ENCODE measurements at regions of chr1 and their contacts with region 1.

Region 1: DNA sequence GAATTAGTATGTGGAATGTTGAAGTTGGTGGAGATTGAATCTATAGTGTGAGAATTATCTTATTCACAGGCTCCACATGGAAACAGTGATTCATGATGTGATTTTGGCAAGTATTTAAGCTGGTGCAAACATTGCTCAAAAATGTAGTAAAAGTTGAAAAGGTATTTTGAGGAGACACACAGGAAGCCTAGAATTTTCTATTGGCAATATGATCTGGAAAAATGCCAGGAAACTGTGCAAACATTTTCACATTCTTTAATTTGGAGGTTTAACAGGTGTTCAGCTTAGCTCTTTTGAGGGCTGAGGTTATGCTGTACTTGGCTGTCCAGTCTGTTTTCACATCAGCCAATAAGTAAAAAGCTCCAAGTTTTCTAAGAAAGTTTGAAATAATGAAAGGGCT is 327.3 kb downstream of the RWDD3 start:
- DNase-seq: no peak
- H3K4me3 ChIP-seq: no peak overlapping the region
- H3K27ac ChIP-seq: no peak overlapping the region
- H3K4me1 ChIP-seq: no peaks in the 10 kb centered on the region
- H3K27me3 ChIP-seq: no peaks in the 10 kb centered on the region
- CTCF ChIP-seq: no peak
- EP300 ChIP-seq: no peak
- POLR2A ChIP-seq: no peak

Region 2: DNA sequence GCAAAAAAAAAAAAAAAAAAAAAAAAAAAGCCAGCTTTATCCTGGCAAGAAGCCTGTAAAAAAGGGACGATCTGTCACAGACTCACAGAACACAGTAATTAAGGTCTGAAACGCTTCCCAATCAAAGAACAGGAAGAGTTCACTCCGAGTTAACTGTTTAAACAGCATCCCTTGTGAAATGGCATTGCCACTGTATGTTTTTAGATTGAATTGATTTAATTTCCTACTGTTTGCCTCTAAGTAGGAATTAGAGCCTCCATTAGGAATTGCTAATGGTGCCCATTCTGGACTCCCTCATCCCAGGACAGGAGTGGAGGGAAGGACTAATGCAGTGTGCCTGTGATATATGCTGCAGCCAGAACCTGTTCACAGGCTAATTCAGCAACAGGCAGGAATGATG is 43.4 kb after region 1 on chr1:
- intact Hi-C with region 1: loop called in 1 of 4 experiments (anchors 2 kb)
- DNase-seq: no peak
- H3K4me3 ChIP-seq: no peak overlapping the region
- H3K27ac ChIP-seq: no peak overlapping the region
- H3K4me1 ChIP-seq: no peaks in the 10 kb centered on the region
- H3K27me3 ChIP-seq: no peaks in the 10 kb centered on the region
- CTCF ChIP-seq: no peak
- EP300 ChIP-seq: no peak
- POLR2A ChIP-seq: no peak